ENCODE measurements at regions of chr6 and their contacts with region 1.

Region 1: DNA sequence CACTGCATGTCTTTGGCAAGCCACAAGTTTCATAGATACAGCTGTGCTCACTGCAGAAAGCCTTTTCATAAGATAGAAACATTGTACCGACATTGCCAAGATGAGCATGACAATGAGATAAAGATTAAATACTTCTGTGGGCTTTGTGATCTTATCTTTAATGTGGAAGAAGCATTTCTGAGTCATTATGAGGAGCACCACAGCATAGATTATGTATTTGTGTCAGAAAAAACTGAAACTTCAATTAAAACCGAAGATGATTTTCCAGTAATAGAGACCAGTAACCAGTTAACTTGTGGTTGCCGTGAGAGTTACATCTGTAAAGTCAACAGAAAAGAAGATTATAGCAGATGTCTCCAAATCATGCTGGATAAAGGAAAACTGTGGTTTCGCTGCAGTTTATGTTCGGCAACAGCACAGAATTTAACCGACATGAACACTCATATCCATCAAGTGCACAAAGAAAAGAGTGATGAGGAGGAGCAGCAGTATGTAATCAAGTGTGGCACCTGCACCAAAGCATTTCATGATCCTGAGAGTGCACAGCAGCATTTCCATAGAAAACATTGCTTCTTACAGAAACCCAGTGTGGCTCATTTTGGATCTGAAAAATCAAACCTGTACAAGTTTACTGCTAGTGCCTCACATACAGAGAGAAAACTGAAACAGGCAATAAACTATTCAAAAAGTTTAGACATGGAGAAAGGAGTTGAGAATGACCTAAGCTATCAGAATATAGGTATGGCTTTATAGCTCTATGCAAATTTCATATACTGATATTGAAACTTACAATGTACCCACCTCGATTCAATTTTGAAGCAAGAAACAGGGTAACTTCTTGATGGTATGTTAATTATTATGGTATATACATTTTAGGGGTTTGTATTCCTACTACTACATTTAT is 23.9 kb upstream of the BAG2 start:
- DNase-seq: no peak
- H3K4me3 Mint-ChIP-seq: peak overlapping the region; percentile 53
- H3K27ac Mint-ChIP-seq: peak overlapping the region; percentile 89
- H3K4me1 Mint-ChIP-seq: peaks cover 25% of the 10 kb centered on the region
- H3K27me3 Mint-ChIP-seq: no peaks in the 10 kb centered on the region

Region 2: GRCh38 chr6:55794136-55794812 is 1353.9 kb before region 1 on chr6:
- intact Hi-C with region 1: no loop called
- DNase-seq: no peak
- H3K4me3 Mint-ChIP-seq: no peak overlapping the region
- H3K27ac Mint-ChIP-seq: no peak overlapping the region
- H3K4me1 Mint-ChIP-seq: no peaks in the 10 kb centered on the region
- H3K27me3 Mint-ChIP-seq: no peaks in the 10 kb centered on the region

Region 3: DNA sequence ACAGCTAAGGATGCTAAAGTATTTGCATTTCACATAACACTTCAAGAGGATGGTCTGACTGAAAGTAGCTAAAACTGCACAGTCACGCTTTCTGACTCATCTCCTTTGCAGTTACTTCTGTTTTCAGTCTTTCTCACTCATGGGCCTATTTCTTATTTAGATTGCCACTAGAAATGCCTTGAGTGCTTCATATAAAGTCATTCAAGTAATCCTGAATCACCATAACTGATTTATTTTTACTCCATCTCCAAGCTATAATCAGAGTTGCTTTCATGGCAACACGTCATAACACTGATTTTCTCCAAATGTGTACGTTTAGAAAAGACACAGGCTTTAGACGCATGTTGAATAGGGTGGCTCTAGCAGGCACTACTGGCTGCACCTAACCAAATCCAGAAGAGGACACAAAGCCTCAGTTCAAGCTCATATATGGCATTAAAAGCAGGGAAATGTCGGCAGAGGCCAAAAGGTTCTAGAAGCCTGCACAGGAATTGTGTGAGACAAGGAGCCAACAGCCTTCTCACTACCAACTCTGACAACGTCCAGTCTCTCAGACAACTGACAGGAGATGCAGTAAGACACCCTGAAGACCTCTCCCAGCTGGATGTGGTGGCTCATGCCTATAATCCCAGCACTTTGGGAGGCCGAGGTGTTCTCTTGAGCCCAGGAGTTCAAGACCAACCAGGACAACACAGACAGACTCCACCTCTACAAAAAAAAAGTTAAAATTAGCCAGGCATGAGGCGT is 257.4 kb before region 1 on chr6:
- intact Hi-C with region 1: loop called (anchors 2 kb)
- DNase-seq: peak; percentile 5
- H3K4me3 Mint-ChIP-seq: no peak overlapping the region
- H3K27ac Mint-ChIP-seq: peak overlapping the region; percentile 53
- H3K4me1 Mint-ChIP-seq: peaks cover 35% of the 10 kb centered on the region
- H3K27me3 Mint-ChIP-seq: no peaks in the 10 kb centered on the region

Measured in activated T-helper 1 cell treated with anti-CD3 and anti-CD28 coated beads, Interleukin-12 subunit alpha, Interleukin-12 subunit beta, Interleukin-2, Interleukin-4 antibody, amounts not matched to agents 30 ng/mL and 10 ng/mL and 1 ng/mL, durations not matched to agents 14 hours and 24 hours and 36 hours (primary cell).